ENCODE measurements at regions of chr9 and their contacts with region 1.

Region 1: DNA sequence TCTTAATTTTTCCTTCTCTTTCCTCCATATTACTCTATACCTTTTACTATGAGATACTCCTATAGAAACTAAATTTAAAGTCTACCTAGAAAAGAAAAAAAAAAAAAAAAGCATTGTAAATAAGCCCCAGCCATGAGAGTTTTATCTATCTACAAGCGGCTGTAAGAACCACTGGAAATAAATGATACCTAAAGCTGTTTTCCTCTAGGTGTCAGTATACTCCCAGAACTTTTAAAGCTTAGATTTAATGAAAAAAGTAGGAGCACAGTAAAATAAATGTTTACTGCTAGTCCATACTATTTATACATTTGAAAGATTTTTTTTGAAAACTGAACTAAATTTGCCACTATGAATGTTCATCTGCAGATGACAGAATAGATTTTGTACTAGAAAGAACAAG is 26.2 kb downstream of the TYRP1 start:
- DNase-seq: no peak
- H3K4me3 ChIP-seq: no peak overlapping the region
- H3K27ac ChIP-seq: no peak overlapping the region
- H3K4me1 ChIP-seq: no peaks in the 10 kb centered on the region
- H3K27me3 ChIP-seq: no peaks in the 10 kb centered on the region
- CTCF ChIP-seq: peak in 4 of 6 experiments; percentile 28 to 56 (median 51)
- POLR2A ChIP-seq: no peak

Region 2: DNA sequence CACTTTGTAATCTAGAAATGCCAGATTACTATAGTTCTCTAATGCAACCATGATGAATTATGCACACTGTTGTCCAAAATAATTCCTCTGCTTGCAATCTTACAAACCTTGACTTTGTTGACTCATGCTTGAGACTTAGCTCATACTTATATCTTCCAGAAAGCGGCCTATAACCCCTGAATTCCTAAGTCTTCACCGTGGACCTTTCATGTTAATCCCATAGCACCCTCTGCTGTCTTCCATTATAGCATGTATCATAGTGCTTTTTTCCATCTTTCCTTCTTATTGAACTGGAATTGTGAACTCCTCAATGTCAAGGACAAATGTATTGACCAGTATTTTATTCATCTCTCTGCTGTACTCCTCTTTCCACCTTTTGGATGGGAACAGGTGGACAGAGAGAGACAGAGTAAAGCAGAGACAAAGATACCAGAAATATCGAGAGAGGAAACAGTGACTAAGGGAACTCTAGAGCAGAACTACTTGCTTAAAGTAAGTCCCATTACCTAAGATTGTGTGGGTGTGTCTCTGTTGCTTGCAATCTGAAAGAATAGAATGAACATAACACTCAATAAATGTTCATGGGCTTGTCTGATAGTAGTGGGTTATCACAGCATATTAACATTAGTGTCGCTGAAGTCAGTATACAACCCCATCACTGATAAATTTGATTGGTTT is 165.4 kb after region 1 on chr9:
- intact Hi-C with region 1: loop called (anchors 5 kb)
- DNase-seq: no peak
- H3K4me3 ChIP-seq: no peak overlapping the region
- H3K27ac ChIP-seq: no peak overlapping the region
- H3K4me1 ChIP-seq: no peaks in the 10 kb centered on the region
- H3K27me3 ChIP-seq: no peaks in the 10 kb centered on the region
- CTCF ChIP-seq: peak in 3 of 6 experiments; percentile 17 to 33 (median 32)
- POLR2A ChIP-seq: no peak

Region 3: GRCh38 chr9:13088720-13089427 is 369.4 kb after region 1 on chr9:
- intact Hi-C with region 1: loop called (anchors 5 kb)
- DNase-seq: no peak
- H3K4me3 ChIP-seq: no peak overlapping the region
- H3K27ac ChIP-seq: no peak overlapping the region
- H3K4me1 ChIP-seq: no peaks in the 10 kb centered on the region
- H3K27me3 ChIP-seq: no peaks in the 10 kb centered on the region
- CTCF ChIP-seq: peak; percentile 20 to 73 (median 54)
- POLR2A ChIP-seq: no peak